Naive thymus-derived CD4-positive, alpha-beta T cell (primary cell): ENCODE measurements at regions of chr16 and their contacts with region 1.

Region 1: GRCh38 chr16:11715246-11715947 is 27.3 kb downstream of the TXNDC11 start:
- DNase-seq: no peak
- ATAC-seq: no peak
- H3K4me3 ChIP-seq: no peak overlapping the region
- H3K4me3 Mint-ChIP-seq: no peak overlapping the region
- H3K27ac ChIP-seq: no peak overlapping the region
- H3K27ac Mint-ChIP-seq: peak overlapping the region in 5 of 9 donors; percentile 6 to 79 (median 48)
- H3K4me1 ChIP-seq: peaks cover 0 to 3% of the 10 kb centered on the region in 2 donors
- H3K4me1 Mint-ChIP-seq: peaks cover 4 to 38% (median 22%) of the 10 kb centered on the region in 7 donors
- H3K27me3 ChIP-seq: no peaks in the 10 kb centered on the region
- H3K27me3 Mint-ChIP-seq: no peaks in the 10 kb centered on the region

Region 2: GRCh38 chr16:10954903-10955302 is 760.5 kb before region 1 on chr16:
- CTCF ChIA-PET with region 1: no interaction called
- POLR2A ChIA-PET with region 1: no interaction called
- intact Hi-C with region 1: loop called (anchors 2 to 5 kb)
- DNase-seq: no peak
- ATAC-seq: no peak
- H3K4me3 ChIP-seq: no peak overlapping the region
- H3K4me3 Mint-ChIP-seq: peak overlapping the region in 3 of 10 donors; percentile 3 to 48 (median 5)
- H3K27ac ChIP-seq: no peak overlapping the region
- H3K27ac Mint-ChIP-seq: peak overlapping the region in 5 of 9 donors; percentile 21 to 66 (median 52)
- H3K4me1 ChIP-seq: peaks cover 14 to 15% of the 10 kb centered on the region in 2 donors
- H3K4me1 Mint-ChIP-seq: peaks cover 17 to 61% (median 44%) of the 10 kb centered on the region in 7 donors
- H3K27me3 ChIP-seq: no peaks in the 10 kb centered on the region
- H3K27me3 Mint-ChIP-seq: no peaks in the 10 kb centered on the region

Region 3: DNA sequence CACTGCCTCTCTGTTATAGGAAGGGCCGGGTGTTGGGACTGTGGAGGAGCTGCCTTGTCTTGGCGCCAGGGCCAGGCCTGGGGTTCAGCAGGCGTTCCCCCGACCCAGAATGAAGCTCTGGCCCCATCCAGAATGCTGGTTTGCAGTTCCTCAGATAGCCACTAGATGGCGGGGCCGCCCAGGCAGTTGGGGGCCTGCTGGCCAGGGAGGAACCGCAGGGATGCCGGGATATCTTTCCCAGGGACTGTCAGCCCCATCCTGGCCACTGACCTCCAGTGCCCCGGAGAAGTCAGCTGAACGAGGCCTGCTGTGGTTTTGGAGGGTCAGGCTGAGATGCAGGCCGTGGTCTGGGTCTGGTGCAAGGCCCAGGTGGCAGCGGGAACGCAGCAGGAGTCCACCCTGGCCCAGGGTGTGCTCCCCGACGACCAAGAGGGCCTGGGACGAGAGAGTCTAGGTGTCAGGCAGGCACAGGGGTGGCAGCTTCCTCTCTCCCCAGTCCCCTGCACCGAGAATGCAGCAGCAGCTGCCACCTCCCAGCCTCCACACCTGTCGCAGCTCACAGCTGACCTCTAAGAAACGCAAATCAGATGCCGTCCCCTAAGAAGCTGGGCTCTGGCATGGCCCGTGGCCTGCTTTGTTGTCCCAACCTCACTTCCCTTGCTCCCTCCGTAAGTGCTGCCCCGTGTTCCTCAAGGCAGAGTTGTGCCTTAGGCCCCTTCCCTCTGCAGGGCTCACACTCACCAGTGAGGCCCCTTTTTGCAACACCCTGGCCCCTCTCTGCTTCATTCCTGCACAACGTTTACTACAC is 319.0 kb before region 1 on chr16:
- CTCF ChIA-PET with region 1: interaction called, 3 read pairs
- POLR2A ChIA-PET with region 1: no interaction called
- intact Hi-C with region 1: loop called in 1 of 2 experiments (anchors 1 kb)
- DNase-seq: peak; percentile 32 to 77 (median 58)
- ATAC-seq: peak; percentile 80
- H3K4me3 ChIP-seq: no peak overlapping the region
- H3K4me3 Mint-ChIP-seq: no peak overlapping the region
- H3K27ac ChIP-seq: no peak overlapping the region
- H3K27ac Mint-ChIP-seq: no peak overlapping the region
- H3K4me1 ChIP-seq: peaks cover 0 to 3% of the 10 kb centered on the region in 2 donors
- H3K4me1 Mint-ChIP-seq: peaks cover 0 to 5% (median 2%) of the 10 kb centered on the region in 7 donors
- H3K27me3 ChIP-seq: no peaks in the 10 kb centered on the region
- H3K27me3 Mint-ChIP-seq: no peaks in the 10 kb centered on the region

Region 4: GRCh38 chr16:11530171-11530940 is 185.0 kb before region 1 on chr16:
- CTCF ChIA-PET with region 1: interaction called, 53 read pairs
- POLR2A ChIA-PET with region 1: interaction called, 4 read pairs
- intact Hi-C with region 1: loop called (anchors 1 kb)
- DNase-seq: no peak
- ATAC-seq: no peak
- H3K4me3 ChIP-seq: no peak overlapping the region
- H3K4me3 Mint-ChIP-seq: no peak overlapping the region
- H3K27ac ChIP-seq: no peak overlapping the region
- H3K27ac Mint-ChIP-seq: no peak overlapping the region
- H3K4me1 ChIP-seq: peaks cover 0 to 6% of the 10 kb centered on the region in 2 donors
- H3K4me1 Mint-ChIP-seq: peaks cover 5 to 12% (median 8%) of the 10 kb centered on the region in 7 donors
- H3K27me3 ChIP-seq: no peaks in the 10 kb centered on the region
- H3K27me3 Mint-ChIP-seq: peaks cover 0 to 24% (median 3%) of the 10 kb centered on the region in 5 donors

Region 5: GRCh38 chr16:11613381-11614303 is 101.8 kb before region 1 on chr16:
- CTCF ChIA-PET with region 1: no interaction called
- POLR2A ChIA-PET with region 1: no interaction called
- intact Hi-C with region 1: no loop called
- DNase-seq: peak in 1 of 9 donors; percentile 26
- ATAC-seq: peak; percentile 76
- H3K4me3 ChIP-seq: no peak overlapping the region
- H3K4me3 Mint-ChIP-seq: peak overlapping the region in 1 of 10 donors; percentile 9
- H3K27ac ChIP-seq: no peak overlapping the region
- H3K27ac Mint-ChIP-seq: peak overlapping the region in 5 of 9 donors; percentile 28 to 87 (median 56)
- H3K4me1 ChIP-seq: peaks cover 16% of the 10 kb centered on the region in 2 donors
- H3K4me1 Mint-ChIP-seq: peaks cover 26 to 51% (median 38%) of the 10 kb centered on the region in 7 donors
- H3K27me3 ChIP-seq: no peaks in the 10 kb centered on the region
- H3K27me3 Mint-ChIP-seq: peaks cover 0 to 10% (median 0%) of the 10 kb centered on the region in 5 donors

Region 6: DNA sequence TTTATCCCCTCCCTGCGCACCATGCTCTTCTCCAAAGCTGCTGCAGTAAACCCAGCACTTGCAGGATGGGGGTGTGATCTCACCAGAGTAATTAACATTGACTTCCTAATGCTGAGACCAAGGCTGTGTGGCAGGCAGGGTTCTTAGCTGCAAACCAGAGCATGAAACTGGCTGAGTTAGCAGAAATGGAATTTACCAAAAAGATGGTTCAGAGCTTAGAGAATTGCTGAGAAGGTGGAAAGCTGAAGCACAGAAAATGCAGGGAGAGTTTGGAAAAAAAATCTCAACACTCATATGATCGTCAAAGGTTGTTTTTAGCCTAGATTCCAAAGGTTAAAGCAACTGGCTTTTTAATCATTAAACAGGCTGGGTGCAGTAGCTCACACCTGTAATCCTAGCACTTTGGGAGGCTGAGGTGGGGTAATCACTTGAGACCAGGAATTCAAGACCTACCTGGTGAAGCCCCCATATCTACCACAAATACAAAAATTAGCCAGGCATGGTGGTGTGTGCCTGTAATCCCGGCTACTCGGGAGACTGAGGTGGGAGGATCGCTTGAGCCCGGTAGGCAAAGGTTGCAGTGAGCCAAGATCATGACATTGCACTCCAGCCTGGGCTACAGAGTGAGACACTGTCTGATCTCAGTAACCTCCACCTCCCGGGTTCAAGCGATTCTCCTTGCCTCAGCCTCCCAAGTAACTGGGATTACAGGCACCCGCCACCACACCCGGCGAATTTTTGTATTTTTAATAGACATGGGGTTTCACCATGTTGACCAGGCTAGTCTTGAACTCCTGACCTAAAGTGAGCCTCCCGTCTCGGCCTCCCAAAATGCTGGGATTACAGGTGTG is 33.2 kb after region 1 on chr16:
- CTCF ChIA-PET with region 1: no interaction called
- POLR2A ChIA-PET with region 1: no interaction called
- intact Hi-C with region 1: no loop called
- DNase-seq: no peak
- ATAC-seq: no peak
- H3K4me3 ChIP-seq: no peak overlapping the region
- H3K4me3 Mint-ChIP-seq: no peak overlapping the region
- H3K27ac ChIP-seq: no peak overlapping the region
- H3K27ac Mint-ChIP-seq: peak overlapping the region in 7 of 9 donors; percentile 2 to 87 (median 39)
- H3K4me1 ChIP-seq: no peaks in the 10 kb centered on the region
- H3K4me1 Mint-ChIP-seq: peaks cover 6 to 12% (median 8%) of the 10 kb centered on the region in 7 donors
- H3K27me3 ChIP-seq: no peaks in the 10 kb centered on the region
- H3K27me3 Mint-ChIP-seq: no peaks in the 10 kb centered on the region

Region 7: GRCh38 chr16:11816103-11816502 is 100.7 kb after region 1 on chr16:
- CTCF ChIA-PET with region 1: interaction called, 3 read pairs
- POLR2A ChIA-PET with region 1: no interaction called
- intact Hi-C with region 1: loop called in 1 of 2 experiments (anchors 1 kb)
- DNase-seq: no peak
- ATAC-seq: no peak
- H3K4me3 ChIP-seq: no peak overlapping the region
- H3K4me3 Mint-ChIP-seq: no peak overlapping the region
- H3K27ac ChIP-seq: no peak overlapping the region
- H3K27ac Mint-ChIP-seq: no peak overlapping the region
- H3K4me1 ChIP-seq: no peaks in the 10 kb centered on the region
- H3K4me1 Mint-ChIP-seq: peaks cover 0 to 6% (median 3%) of the 10 kb centered on the region in 7 donors
- H3K27me3 ChIP-seq: no peaks in the 10 kb centered on the region
- H3K27me3 Mint-ChIP-seq: no peaks in the 10 kb centered on the region